ENCODE measurements at regions of chr7 and their contacts with region 1.

Region 1: GRCh38 chr7:139777948-139778841 is at the start of gene HIPK2:
- DNase-seq: peak; percentile 92
- ATAC-seq: peak; percentile 85
- total RNA-seq, gene HIPK2: 88.5 TPM

Region 2: GRCh38 chr7:139645572-139646523 is 132.3 kb before region 1 on chr7:
- intact Hi-C with region 1: loop called (anchors 5 kb)
- DNase-seq: peak; percentile 78
- ATAC-seq: peak; percentile 74

Region 3: DNA sequence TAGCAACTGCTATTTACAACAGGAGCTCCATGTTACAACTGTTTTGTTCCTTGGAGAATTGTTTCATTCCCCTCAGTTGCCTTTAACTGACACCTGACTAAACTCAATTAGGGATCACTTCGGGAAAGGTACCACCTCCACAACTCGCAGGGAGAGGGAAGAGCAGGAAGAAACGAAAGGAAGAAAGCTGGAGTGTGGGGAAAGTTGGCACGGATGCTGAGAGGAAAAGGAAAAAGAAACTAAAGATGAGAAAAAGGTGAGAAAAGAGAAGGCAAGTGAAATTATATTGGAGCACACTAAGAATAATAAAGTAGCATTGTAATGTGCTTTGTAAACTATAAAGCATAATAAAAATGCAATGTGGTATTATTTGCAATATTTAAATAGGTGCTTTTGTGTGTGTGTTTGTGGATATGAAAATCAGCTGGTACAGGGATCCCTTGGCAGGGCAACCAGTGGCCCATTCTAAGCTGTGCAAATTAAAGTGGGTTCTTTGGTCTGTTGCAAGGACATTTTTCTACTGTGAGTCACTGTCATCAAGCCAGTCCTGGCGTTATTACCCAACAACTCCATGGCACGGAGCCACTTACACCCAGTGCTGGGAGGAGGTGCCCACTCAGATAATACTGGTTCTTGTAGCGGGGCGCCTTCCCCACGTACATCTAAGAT is 46.3 kb before region 1 on chr7:
- intact Hi-C with region 1: loop called (anchors 5 kb)
- DNase-seq: peak; percentile 87
- ATAC-seq: peak; percentile 73